Mammary epithelial cell (primary cell): ENCODE measurements at regions of chr17 and their contacts with region 1.

Region 1: DNA sequence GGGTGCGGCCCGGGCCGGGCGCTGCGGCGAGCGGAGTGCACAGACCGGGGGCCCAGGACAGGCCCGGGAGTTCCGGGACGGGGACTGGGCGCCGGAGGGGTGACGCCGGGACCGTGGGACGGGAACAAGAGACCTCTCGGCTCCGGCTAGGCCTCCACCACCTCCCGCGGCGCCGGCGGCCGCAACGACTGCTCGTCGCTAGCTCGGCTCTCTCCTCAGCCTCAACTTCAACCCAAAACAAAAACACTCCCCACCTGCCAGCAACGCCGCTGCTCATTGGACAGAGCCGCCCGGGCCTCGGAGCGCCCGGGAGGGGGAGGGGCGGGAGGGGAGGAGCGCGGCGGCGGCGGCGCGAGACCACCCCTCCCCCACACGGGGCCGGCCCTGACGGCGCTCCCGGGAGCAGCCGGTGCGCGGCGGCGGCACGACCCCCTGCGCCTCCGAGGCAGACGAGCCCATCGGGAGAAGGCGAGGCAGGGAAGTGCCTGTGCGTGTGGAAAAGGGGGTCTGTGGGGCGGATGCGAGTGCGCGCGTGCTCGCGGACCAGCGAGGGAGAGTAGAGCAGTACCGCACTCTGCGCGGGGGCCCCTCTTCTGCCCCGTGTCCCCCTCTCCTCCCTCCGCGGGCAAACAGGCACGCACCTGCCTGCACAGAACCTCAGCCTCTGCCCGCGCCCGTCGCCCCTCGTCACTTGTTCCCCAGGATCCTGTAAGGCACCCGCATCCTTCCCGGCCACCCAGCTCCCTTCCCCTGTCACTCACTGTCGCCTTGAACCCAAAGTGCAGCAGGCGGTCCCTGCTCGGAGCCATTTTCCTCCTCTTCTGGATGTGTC is at the start of gene FBXL20:
- DNase-seq: peak; percentile 89
- H3K4me3 ChIP-seq: peak within 1 kb of the TSS; percentile 95 to 100 (median 97)
- H3K27ac ChIP-seq: peak within 1 kb of the TSS; percentile 59
- H3K4me1 ChIP-seq: peaks cover 21% of the 10 kb centered on the region
- H3K27me3 ChIP-seq: no peaks in the 10 kb centered on the region
- CTCF ChIP-seq: no peak
- total RNA-seq, gene FBXL20: 13.0 to 17.0 TPM

Region 2: DNA sequence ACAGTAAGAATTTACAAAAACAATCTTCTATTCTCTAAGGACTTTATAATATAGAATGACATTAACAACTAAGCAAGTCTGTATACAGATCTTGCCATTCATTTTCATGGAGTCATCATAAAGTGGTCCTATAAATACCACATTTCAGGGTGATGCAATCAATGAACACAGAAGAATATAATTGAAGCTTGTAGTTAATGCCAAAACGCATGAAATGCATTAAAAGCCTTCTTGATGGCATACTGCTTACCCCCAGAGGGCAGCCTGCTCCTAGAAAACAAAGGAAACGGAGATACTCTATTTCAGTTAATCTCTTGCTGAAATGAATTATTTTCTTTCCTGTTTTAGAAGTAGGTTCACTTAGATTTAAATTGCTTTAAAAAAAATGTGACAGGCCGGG is 130.7 kb before region 1 on chr17:
- CTCF ChIA-PET with region 1: interaction called, 3 read pairs
- dilution Hi-C with region 1: no loop called
- in situ Hi-C with region 1: no loop called
- intact Hi-C with region 1: loop called (anchors 5 kb)
- DNase-seq: peak; percentile 2
- H3K4me3 ChIP-seq: no peak overlapping the region
- H3K27ac ChIP-seq: no peak overlapping the region
- H3K4me1 ChIP-seq: no peaks in the 10 kb centered on the region
- H3K27me3 ChIP-seq: no peaks in the 10 kb centered on the region
- CTCF ChIP-seq: peak; percentile 19 to 24

Region 3: GRCh38 chr17:39364626-39365025 is 37.0 kb before region 1 on chr17:
- CTCF ChIA-PET with region 1: no interaction called
- dilution Hi-C with region 1: loop called (anchors 5 kb)
- in situ Hi-C with region 1: no loop called
- intact Hi-C with region 1: no loop called
- DNase-seq: no peak
- H3K4me3 ChIP-seq: no peak overlapping the region
- H3K27ac ChIP-seq: no peak overlapping the region
- H3K4me1 ChIP-seq: no peaks in the 10 kb centered on the region
- H3K27me3 ChIP-seq: no peaks in the 10 kb centered on the region
- CTCF ChIP-seq: no peak

Region 4: GRCh38 chr17:39485555-39485954 is 83.9 kb after region 1 on chr17:
- CTCF ChIA-PET with region 1: no interaction called
- dilution Hi-C with region 1: no loop called
- in situ Hi-C with region 1: no loop called
- intact Hi-C with region 1: no loop called
- DNase-seq: peak; percentile 94
- H3K4me3 ChIP-seq: no peak overlapping the region
- H3K27ac ChIP-seq: peak overlapping the region; percentile 60
- H3K4me1 ChIP-seq: peaks cover 17% of the 10 kb centered on the region
- H3K27me3 ChIP-seq: no peaks in the 10 kb centered on the region
- CTCF ChIP-seq: no peak

Region 5: DNA sequence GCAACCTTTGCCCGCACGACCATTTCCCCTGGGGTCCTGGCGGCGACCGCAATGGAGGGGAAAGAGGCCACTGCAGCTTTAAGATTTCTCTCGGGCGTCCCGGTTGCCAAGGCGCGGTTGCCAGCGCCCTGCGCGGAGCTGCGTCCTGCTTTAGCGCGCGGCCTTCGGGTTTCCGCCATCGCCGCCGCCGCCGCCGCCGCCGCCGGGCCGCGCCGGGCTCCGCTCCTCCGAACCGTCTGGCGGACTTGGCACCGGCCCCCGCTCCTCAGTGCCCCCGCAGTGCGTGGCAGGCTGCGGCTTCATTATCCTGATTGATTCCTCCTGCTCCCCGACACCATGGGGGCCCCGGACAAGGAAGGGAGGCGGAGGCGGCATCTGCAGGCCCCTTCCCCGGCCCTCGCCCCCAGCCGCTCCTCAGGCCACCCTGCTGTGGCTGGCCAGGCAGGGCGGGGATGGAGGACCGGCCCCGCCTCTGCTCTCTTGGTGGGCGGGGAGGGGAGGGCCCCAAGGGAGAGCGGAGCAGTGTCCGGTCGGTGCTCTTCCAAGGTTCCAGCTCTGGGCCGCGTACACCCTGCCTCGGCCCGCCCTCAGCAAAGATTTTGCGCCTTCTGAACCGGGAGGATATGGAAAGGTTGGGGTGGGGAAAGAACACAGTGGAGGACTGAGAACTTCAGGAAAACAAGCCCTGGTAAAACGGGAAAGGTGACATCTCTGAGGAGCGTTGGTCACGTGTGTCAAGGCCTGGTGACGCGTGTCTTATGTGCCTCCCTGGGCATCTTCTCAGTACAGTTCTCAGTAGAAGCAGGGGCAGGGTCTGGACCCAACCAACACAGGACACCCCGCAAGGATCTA is 172.0 kb after region 1 on chr17:
- CTCF ChIA-PET with region 1: no interaction called
- dilution Hi-C with region 1: no loop called
- in situ Hi-C with region 1: no loop called
- intact Hi-C with region 1: no loop called
- DNase-seq: peak; percentile 67
- H3K4me3 ChIP-seq: peak overlapping the region; percentile 52 to 61 (median 57)
- H3K27ac ChIP-seq: peak overlapping the region; percentile 48
- H3K4me1 ChIP-seq: peaks cover 4% of the 10 kb centered on the region
- H3K27me3 ChIP-seq: no peaks in the 10 kb centered on the region
- CTCF ChIP-seq: no peak